IMR-90 (cell line): ENCODE measurements at regions of chr6 and their contacts with region 1.

Region 1: GRCh38 chr6:33313709-33314514 is at the start of gene TAPBP:
- DNase-seq: peak; percentile 72
- ATAC-seq: peak; percentile 16
- H3K4me3 ChIP-seq: peak within 1 kb of the TSS; percentile 64
- H3K27ac ChIP-seq: peak within 1 kb of the TSS; percentile 97
- H3K4me1 ChIP-seq: peaks cover 14% of the 10 kb centered on the region
- H3K27me3 ChIP-seq: no peaks in the 10 kb centered on the region
- CTCF ChIP-seq: no peak
- POLR2A ChIP-seq: peak; percentile 75
- RAD21 ChIP-seq: no peak
- total RNA-seq, gene TAPBP: 12.5 and 13.1 TPM in 2 replicates

Region 2: GRCh38 chr6:33299237-33299944 is 14.5 kb before region 1 on chr6:
- CTCF ChIA-PET with region 1: interaction called, 4 read pairs
- POLR2A ChIA-PET with region 1: interaction called, 3 read pairs
- dilution Hi-C with region 1: no loop called
- in situ Hi-C with region 1: no loop called
- intact Hi-C with region 1: loop called (anchors 1 kb)
- DNase-seq: peak; percentile 88
- ATAC-seq: peak; percentile 70
- H3K4me3 ChIP-seq: peak overlapping the region; percentile 78
- H3K27ac ChIP-seq: peak overlapping the region; percentile 87
- H3K4me1 ChIP-seq: no peaks in the 10 kb centered on the region
- H3K27me3 ChIP-seq: no peaks in the 10 kb centered on the region
- CTCF ChIP-seq: peak; percentile 82
- POLR2A ChIP-seq: peak; percentile 91
- RAD21 ChIP-seq: peak; percentile 57

Region 3: GRCh38 chr6:33344701-33345697 is 31.1 kb after region 1 on chr6:
- CTCF ChIA-PET with region 1: no interaction called
- POLR2A ChIA-PET with region 1: no interaction called
- dilution Hi-C with region 1: no loop called
- in situ Hi-C with region 1: no loop called
- intact Hi-C with region 1: loop called (anchors 1 kb)
- DNase-seq: peak; percentile 81
- ATAC-seq: peak; percentile 76
- H3K4me3 ChIP-seq: no peak overlapping the region
- H3K27ac ChIP-seq: no peak overlapping the region
- H3K4me1 ChIP-seq: peaks cover 2% of the 10 kb centered on the region; the same call in 1 of the 2 replicates
- H3K27me3 ChIP-seq: peaks cover 1% of the 10 kb centered on the region
- CTCF ChIP-seq: peak; percentile 50
- POLR2A ChIP-seq: no peak
- RAD21 ChIP-seq: peak; percentile 53

Region 4: DNA sequence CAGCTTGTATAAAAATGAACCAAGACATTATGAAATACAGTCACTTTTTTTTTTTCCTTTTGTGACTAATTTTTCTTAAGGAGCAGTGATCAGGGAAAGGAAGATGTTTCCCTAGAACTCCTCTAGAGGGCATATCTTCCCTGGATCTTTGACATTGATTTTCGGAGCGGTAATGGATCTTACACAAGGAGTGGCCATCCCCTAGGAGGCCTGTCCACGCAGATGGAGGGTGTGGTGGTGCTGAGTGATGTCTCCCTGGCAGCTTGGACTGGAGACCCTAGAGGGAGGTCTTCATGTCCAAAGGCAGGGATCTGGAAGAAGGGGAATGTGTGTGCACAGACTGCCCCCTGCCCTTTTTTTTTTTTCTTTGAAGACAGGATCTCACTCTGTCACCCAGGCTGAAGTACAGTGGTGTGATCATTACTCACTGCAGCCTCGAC is 70.7 kb after region 1 on chr6:
- CTCF ChIA-PET with region 1: interaction called, 3 read pairs
- POLR2A ChIA-PET with region 1: interaction called, 11 read pairs
- dilution Hi-C with region 1: no loop called
- in situ Hi-C with region 1: no loop called
- intact Hi-C with region 1: no loop called
- DNase-seq: peak; percentile 80
- ATAC-seq: peak; percentile 96
- H3K4me3 ChIP-seq: no peak overlapping the region
- H3K27ac ChIP-seq: no peak overlapping the region
- H3K4me1 ChIP-seq: no peaks in the 10 kb centered on the region
- H3K27me3 ChIP-seq: 0 out of 2 replicates have a peak, but pooled peaks cover 2% of the 10 kb centered on the region
- CTCF ChIP-seq: peak; percentile 61
- POLR2A ChIP-seq: no peak
- RAD21 ChIP-seq: peak; percentile 57

Region 5: GRCh38 chr6:33417903-33418689 is 104.2 kb after region 1 on chr6 and contains the start of gene CUTA:
- CTCF ChIA-PET with region 1: no interaction called
- POLR2A ChIA-PET with region 1: no interaction called
- dilution Hi-C with region 1: no loop called
- in situ Hi-C with region 1: no loop called
- intact Hi-C with region 1: loop called (anchors 5 kb)
- DNase-seq: peak; percentile 100
- ATAC-seq: peak; percentile 83
- H3K4me3 ChIP-seq: peak within 1 kb of the TSS; percentile 63
- H3K27ac ChIP-seq: peak within 1 kb of the TSS; percentile 98
- H3K4me1 ChIP-seq: peaks cover 19% of the 10 kb centered on the region
- H3K27me3 ChIP-seq: no peaks in the 10 kb centered on the region
- CTCF ChIP-seq: peak; percentile 20; the same call in 1 of the 2 replicates
- POLR2A ChIP-seq: no peak; the same call in 1 of the 2 replicates
- RAD21 ChIP-seq: no peak
- total RNA-seq, gene CUTA: 122 and 136 TPM in 2 replicates